ENCODE measurements at regions of chr13 and their contacts with region 1.

Region 1: GRCh38 chr13:20902438-20903163 is at the start of gene XPO4:
- DNase-seq: peak; percentile 80
- ATAC-seq: peak; percentile 93
- H3K4me3 Mint-ChIP-seq: peak within 1 kb of the TSS; percentile 91
- H3K27ac Mint-ChIP-seq: peak within 1 kb of the TSS; percentile 86
- H3K4me1 Mint-ChIP-seq: peaks cover 32% of the 10 kb centered on the region
- H3K27me3 Mint-ChIP-seq: peaks cover 2% of the 10 kb centered on the region
- CTCF ChIP-seq: no peak
- total RNA-seq, gene XPO4: 25.2 and 27.4 TPM in 2 replicates

Region 2: DNA sequence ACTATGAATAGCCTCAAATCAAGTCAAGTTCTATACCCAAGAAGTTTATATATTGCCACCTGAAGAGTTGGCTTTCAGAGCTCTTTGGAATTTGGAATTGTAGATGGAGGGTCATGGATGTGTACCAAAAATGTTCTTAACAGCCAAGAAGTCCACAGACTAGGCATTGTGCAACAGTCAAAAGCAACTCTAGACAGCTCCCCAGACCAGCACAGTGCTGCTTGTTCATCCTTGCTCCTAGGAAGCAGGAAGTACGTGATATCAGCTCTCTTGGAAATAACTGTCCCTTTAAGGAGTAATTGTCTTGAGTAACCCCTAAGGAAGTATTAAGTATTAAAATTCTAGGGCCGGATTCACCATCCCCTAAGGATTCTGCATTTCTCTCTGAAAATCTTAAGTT is 229.8 kb before region 1 on chr13:
- CTCF ChIA-PET with region 1: no interaction called
- POLR2A ChIA-PET with region 1: no interaction called
- intact Hi-C with region 1: no loop called
- DNase-seq: no peak
- ATAC-seq: no peak
- H3K4me3 Mint-ChIP-seq: no peak overlapping the region
- H3K27ac Mint-ChIP-seq: no peak overlapping the region
- H3K4me1 Mint-ChIP-seq: no peaks in the 10 kb centered on the region
- H3K27me3 Mint-ChIP-seq: no peaks in the 10 kb centered on the region
- CTCF ChIP-seq: no peak

Region 3: DNA sequence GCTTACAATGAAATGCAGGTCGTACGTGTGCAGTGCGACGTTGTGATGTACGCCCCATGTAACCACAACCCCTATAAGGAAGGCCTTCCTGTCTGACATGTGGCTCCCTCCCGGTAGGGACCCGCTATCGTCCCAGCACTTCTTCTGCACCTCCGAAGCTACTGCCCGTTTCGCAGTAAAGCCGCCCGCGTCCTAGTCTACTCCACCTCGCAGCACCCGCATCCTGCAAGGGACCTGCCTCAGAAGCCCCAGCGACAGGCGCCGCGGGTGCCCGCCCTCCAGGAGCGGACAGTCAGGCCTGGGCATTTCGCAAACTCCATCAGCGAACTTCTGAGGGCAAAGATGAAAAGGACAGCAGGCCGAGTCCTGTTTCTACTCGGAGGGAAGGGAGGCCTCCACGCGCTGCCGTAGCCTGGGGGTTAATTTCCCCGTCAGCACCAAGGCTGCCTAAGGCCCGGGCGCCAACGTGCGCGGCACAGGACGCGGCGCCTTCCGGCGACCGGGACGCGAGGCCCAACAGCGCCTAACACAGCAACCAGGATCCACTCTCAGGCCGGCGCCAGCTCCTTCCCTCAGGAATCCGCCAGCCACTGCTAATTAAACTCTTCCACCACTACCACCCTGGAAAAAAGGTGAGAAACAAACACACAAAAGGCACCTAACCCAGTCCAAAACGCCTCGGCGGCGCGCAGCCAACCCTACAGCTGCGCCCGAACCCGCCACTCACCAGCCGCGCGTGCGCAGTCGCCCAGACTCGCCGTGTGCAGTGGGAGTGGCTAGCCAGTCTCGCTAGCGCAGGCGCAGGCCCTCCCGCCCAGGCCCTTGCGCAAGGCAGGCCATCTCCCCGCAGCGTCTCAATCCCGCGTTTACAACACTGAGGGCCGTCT is 129.2 kb before region 1 on chr13 and contains the start of gene EEF1AKMT1:
- CTCF ChIA-PET with region 1: no interaction called
- POLR2A ChIA-PET with region 1: interaction called, 16 read pairs
- intact Hi-C with region 1: loop called (anchors 1 kb)
- DNase-seq: peak; percentile 94
- ATAC-seq: peak; percentile 95
- H3K4me3 Mint-ChIP-seq: peak within 1 kb of the TSS; percentile 98
- H3K27ac Mint-ChIP-seq: peak within 1 kb of the TSS; percentile 99
- H3K4me1 Mint-ChIP-seq: peaks cover 21% of the 10 kb centered on the region
- H3K27me3 Mint-ChIP-seq: no peaks in the 10 kb centered on the region
- CTCF ChIP-seq: no peak
- total RNA-seq, gene EEF1AKMT1: 3.9 and 7.4 TPM in 2 replicates

Region 4: DNA sequence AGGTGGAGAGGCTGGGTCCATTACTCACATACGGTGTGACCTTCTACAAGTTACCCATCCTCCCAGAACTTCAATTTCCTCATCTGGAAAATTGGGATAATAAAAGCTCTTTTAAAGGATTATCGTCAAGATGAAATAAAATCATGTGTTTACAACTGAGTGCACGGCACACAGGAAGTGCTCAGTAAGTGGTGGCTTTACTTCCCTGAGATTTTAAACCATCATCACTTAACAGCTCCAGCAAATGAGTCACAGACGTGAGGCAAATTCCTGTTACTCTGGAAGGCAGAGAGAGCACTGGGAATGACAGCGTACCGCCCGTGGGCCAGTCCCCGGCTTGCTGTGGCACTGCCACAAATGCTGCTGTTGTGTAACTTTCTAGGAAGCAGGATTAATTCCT is 338.0 kb after region 1 on chr13:
- CTCF ChIA-PET with region 1: no interaction called
- POLR2A ChIA-PET with region 1: no interaction called
- intact Hi-C with region 1: no loop called
- DNase-seq: no peak
- ATAC-seq: no peak
- H3K4me3 Mint-ChIP-seq: no peak overlapping the region
- H3K27ac Mint-ChIP-seq: no peak overlapping the region
- H3K4me1 Mint-ChIP-seq: no peaks in the 10 kb centered on the region
- H3K27me3 Mint-ChIP-seq: peaks cover 2% of the 10 kb centered on the region
- CTCF ChIP-seq: no peak

Measured in activated B cell treated with CpG ODN at 0.5 μM for 24 hours (primary cell).